Heart right ventricle (tissue), 16 donors: ENCODE measurements at regions of chr16 and their contacts with region 1.

Region 1: DNA sequence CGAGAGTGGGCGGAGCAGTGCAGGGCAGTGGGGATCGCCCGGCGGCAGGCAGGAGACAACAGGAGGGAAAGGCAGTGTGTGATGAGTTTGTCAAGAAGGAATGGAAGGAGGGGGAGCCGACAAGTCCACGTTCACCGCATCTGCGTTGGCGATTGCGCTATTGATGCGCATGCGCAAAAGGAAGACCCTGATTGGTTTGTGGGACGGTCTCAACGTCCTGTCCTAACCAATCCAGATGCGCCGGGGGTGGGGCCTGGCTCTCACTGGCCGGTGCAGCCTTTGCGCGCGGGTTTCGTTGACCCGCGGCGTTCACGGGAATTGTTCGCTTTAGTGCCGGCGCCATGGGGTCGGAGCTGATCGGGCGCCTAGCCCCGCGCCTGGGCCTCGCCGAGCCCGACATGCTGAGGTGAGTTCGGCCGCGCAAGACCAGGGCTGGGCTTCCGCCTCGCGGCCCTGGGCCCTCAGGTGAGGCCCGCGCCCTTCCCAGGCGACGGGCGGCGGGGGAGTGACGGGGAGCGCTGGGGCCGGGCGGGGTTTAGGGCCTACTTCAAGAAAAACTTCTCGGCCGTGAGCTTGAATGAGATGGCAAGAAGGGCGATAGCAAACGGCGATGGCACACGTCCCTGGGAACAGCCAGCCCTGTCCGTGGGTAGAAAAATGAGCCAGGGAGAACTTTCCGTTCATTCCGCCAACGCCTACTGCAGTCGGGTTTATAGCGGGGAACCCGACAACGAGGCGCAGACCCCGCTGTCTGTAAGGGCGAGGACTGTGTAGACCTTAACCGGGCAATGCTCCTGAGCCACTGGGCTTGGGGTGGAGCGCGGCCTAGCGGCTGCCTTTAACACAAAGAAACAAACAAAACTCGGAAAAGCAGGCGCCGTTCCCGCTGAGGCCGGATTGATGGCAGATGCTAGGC is at the start of gene ORC6:
- DNase-seq: peak; percentile 97 to 98
- ATAC-seq: peak; percentile 89 to 95 (median 92)
- H3K4me3 ChIP-seq: peak within 1 kb of the TSS; percentile 70 to 94 (median 86)
- H3K27ac ChIP-seq: peak within 1 kb of the TSS; percentile 64 to 95 (median 90)
- H3K4me1 ChIP-seq: peaks cover 9 to 54% (median 45%) of the 10 kb centered on the region in 9 donors
- H3K27me3 ChIP-seq: no peaks in the 10 kb centered on the region
- CTCF ChIP-seq: peak in 5 of 9 donors; percentile 27 to 52 (median 44)
- total RNA-seq, gene ORC6: 0.56 to 2.7 (median 1.9) TPM

Region 2: GRCh38 chr16:46649928-46650623 is 39.5 kb before region 1 on chr16:
- intact Hi-C with region 1: no loop called
- DNase-seq: peak in 1 of 2 donors; percentile 11
- ATAC-seq: peak; percentile 38 to 86 (median 58)
- H3K4me3 ChIP-seq: peak overlapping the region in 6 of 10 donors; percentile 7 to 39 (median 28)
- H3K27ac ChIP-seq: peak overlapping the region in 7 of 10 donors; percentile 22 to 82 (median 52)
- H3K4me1 ChIP-seq: no peaks in the 10 kb centered on the region
- H3K27me3 ChIP-seq: no peaks in the 10 kb centered on the region
- CTCF ChIP-seq: no peak

Region 3: GRCh38 chr16:46743238-46743719 is 53.7 kb after region 1 on chr16:
- intact Hi-C with region 1: loop called in 2 of 10 experiments (anchors 2 to 10 kb)
- DNase-seq: peak; percentile 43 to 47
- ATAC-seq: peak; percentile 2 to 38 (median 15)
- H3K4me3 ChIP-seq: peak overlapping the region in 8 of 10 donors; percentile 16 to 70 (median 34)
- H3K27ac ChIP-seq: peak overlapping the region; percentile 82 to 99 (median 94)
- H3K4me1 ChIP-seq: peaks cover 0 to 45% (median 30%) of the 10 kb centered on the region in 9 donors
- H3K27me3 ChIP-seq: no peaks in the 10 kb centered on the region
- CTCF ChIP-seq: no peak

Region 4: GRCh38 chr16:46789499-46790414 is 100.1 kb after region 1 on chr16:
- intact Hi-C with region 1: loop called in 1 of 10 experiments (anchors 10 kb)
- DNase-seq: peak; percentile 73 to 86
- ATAC-seq: peak; percentile 96 to 99 (median 98)
- H3K4me3 ChIP-seq: peak overlapping the region; percentile 43 to 84 (median 69)
- H3K27ac ChIP-seq: peak overlapping the region in 9 of 10 donors; percentile 20 to 83 (median 64)
- H3K4me1 ChIP-seq: peaks cover 0 to 29% (median 4%) of the 10 kb centered on the region in 9 donors
- H3K27me3 ChIP-seq: no peaks in the 10 kb centered on the region
- CTCF ChIP-seq: no peak

Region 5: DNA sequence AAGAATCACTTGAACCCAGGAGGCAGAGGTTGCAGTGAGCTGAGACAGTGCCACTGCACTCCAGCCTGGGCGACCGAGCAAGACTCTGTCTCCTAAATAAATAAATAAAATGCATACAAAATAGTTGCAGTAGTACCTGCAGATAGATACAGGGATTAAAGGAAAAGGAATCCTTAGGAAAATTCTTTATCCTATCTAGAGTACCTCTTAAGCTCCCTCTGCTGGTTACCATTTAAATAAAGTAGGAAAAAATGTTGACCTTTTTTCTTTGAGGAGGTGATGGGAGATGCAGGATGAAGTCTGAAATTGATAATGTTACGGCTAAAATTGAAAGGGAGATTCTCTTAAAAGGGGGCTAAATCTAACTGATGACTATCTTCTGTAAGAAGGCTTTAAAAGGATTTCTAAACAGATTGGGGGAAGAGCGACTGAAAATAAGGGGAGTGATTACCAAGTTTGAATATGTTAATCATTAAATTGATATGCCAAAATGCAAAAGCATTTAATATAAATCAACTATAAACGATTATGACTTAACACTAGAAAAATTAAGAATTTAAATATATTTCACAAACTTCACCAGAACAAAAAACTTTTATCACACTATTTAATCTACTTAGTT is 111.9 kb after region 1 on chr16:
- intact Hi-C with region 1: loop called in 5 of 10 experiments (anchors 5 to 10 kb)
- DNase-seq: no peak
- ATAC-seq: peak in 3 of 8 donors; percentile 26 to 55 (median 53)
- H3K4me3 ChIP-seq: no peak overlapping the region
- H3K27ac ChIP-seq: no peak overlapping the region
- H3K4me1 ChIP-seq: no peaks in the 10 kb centered on the region
- H3K27me3 ChIP-seq: no peaks in the 10 kb centered on the region
- CTCF ChIP-seq: peak in 8 of 9 donors; percentile 14 to 66 (median 51)

Region 6: DNA sequence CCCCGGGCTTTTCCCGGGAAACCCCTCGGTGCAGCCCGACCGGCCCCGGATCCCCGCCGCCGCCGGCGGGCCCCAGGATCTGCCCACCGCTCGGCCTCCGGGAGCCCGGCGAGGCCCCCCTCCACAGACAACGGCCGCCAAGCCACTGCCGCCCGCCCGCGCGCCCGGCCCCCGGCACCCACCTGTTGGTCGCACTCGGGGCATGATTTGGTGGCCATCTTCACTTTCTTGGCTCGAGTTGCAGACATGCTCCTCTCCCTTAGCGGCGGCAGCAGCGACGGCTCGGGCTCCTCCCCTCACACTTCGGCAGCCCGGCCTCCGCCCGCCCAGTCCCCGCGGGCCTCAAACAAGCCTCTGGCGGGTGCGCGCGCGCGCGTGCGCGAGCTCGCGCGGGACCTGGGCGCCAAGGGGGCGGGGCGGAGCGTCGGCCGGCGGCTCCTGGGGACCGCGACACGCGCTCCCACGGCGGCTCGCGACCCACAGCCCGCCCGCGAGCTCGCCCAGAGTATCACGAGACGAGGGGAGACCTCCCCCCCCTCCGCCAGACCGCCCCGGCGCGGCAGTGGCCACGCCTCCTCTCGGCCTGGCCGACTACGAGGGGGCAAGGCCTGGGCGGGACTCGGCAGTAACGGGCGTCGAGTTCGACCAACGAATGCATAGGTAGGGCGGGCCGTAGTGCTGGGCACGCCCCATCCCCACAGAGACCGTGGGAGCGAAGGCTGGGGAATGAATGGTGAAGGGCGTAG is 141.5 kb after region 1 on chr16 and contains the start of gene C16orf87:
- intact Hi-C with region 1: loop called in 2 of 10 experiments (anchors 5 kb)
- DNase-seq: peak; percentile 92 to 94
- ATAC-seq: peak; percentile 97 to 99 (median 98)
- H3K4me3 ChIP-seq: peak within 1 kb of the TSS; percentile 69 to 96 (median 92)
- H3K27ac ChIP-seq: peak within 1 kb of the TSS; percentile 76 to 97 (median 90)
- H3K4me1 ChIP-seq: peaks cover 0 to 19% (median 12%) of the 10 kb centered on the region in 9 donors
- H3K27me3 ChIP-seq: no peaks in the 10 kb centered on the region
- CTCF ChIP-seq: no peak
- total RNA-seq, gene C16orf87: 8.6 to 17.8 (median 12.3) TPM